ENCODE measurements at regions of chr22 and their contacts with region 1.

Region 1: DNA sequence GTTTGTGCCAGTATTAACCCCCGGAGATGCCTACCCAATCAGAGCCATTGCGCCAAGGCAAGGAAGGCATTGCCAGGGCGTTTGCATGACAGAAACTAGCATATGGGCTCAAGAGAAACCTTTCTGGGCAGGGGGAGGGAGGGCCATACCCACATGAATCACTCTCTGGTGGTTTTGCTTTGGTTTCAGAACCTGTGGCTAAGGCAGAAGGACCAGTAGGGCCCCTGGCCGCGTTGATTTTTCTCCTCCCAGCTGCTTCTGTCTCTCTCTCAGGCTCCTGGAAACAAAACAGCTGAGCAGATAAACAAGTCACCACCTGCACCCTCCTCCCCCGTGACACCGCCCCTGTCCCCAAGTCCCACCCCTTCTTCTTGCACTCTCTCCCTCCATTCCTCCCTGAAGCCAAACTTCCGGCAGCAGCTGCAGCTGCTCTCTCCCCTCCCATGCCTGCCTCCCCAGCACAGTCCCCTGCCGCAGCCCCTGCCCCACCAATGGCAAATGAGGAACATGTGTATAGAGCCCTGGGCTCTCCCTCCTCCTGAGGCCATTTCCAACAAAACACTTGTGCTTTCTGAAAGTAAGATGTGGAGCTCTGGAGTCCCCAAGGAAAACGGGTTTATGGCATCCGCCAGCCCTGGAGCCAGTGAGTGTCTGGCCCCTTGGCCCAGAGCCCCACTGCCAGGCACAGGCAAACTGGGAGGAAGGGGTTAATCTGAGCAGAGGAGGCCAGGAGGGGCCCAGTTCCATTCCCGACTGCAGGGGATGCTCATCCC is 39.0 kb upstream of the ADA2 start:
- DNase-seq: peak; percentile 62
- ATAC-seq: peak; percentile 93

Region 2: GRCh38 chr22:17199003-17199731 is 59.0 kb before region 1 on chr22:
- intact Hi-C with region 1: loop called (anchors 10 kb)
- DNase-seq: peak; percentile 64
- ATAC-seq: peak; percentile 79

Region 3: DNA sequence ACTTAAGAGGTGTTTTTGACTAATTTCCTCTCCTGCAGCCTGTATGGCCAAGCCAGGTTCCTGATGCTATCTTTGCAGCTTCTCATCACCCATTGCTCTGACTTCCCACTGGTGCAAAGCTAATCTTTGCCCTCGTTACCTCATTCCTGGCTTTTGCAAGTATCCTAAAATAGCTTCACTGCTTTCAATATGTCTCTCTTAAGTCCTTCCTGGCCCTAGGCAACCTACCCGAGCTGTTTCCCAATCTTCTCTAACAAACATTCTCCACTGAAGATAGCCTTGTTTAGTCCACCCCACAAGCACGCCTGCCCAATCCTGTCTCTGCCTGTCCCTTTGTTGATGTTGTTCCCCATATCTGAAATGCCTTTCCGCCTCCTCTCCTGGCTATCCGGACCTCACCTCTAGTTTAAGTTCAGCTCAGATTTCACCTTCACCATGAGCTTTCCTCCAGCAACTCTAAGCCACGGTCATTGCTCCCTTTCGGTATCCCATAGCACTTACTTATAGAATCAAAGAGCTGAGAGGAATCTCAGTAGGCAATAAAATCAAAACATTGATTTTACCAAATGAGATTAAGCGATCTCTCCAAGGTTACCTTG is 81.0 kb after region 1 on chr22:
- intact Hi-C with region 1: no loop called
- DNase-seq: no peak
- ATAC-seq: peak; percentile 82

Region 4: DNA sequence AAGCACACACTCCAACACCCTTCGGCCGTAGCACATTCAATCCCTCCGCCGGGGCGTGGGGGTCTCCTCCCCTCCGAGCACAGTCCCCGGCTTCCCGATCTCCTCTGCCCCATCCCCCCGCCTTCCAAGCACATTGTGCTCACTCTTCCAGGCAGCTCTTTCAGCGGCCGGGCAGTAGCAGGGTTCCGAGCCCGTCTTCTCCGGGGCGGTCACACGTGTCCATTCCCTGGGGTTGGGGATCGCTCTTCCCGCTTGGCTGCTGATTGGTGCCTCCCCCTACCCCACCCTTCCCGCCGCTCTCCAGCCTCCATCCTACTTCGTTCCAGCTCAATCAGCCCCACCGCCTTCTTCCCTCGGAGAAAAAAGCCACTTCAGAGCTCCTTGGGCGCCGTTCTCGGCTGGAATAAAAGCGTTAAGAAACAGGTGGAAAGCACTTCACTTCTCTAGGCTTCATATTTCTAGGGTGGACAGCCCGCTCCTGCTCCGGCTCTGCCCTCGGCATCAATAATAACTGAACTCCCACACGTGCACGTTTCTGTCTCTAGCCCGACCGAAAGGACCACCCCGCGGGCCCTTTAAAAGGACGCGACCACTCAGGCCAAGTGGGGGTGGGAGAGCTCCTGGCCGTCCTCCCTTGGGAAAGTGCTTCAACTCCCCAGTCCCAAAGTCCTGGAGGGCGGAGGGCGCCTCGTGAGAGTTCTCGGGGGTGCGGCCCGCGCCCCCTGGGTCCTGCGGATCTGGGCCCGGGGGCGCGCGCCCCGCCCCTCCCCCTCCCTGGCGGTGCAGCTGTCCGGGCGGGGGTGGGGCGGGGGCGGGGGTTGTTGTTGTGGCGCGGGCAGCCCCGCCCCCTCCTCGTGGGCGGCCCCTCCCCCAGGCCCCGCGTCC is 110.6 kb after region 1 on chr22:
- intact Hi-C with region 1: loop called (anchors 10 kb)
- DNase-seq: peak; percentile 69
- ATAC-seq: peak; percentile 81